CD4-positive, alpha-beta memory T cell (primary cell): ENCODE measurements at regions of chr10 and their contacts with region 1.

Region 1: GRCh38 chr10:58334817-58335305 is at the start of gene UBE2D1:
- DNase-seq: peak; percentile 73 to 76 (median 74)
- H3K4me3 ChIP-seq: peak within 1 kb of the TSS; percentile 59 to 63
- H3K4me3 Mint-ChIP-seq: peak within 1 kb of the TSS; percentile 91 to 97 (median 94)
- H3K27ac ChIP-seq: peak within 1 kb of the TSS; percentile 58
- H3K27ac Mint-ChIP-seq: peak within 1 kb of the TSS; percentile 38 to 96 (median 90)
- H3K4me1 ChIP-seq: peaks cover 30% of the 10 kb centered on the region
- H3K4me1 Mint-ChIP-seq: peaks cover 25 to 45% (median 34%) of the 10 kb centered on the region in 4 donors
- H3K27me3 ChIP-seq: no peaks in the 10 kb centered on the region
- H3K27me3 Mint-ChIP-seq: peaks cover 0 to 3% of the 10 kb centered on the region in 2 donors
- total RNA-seq, gene UBE2D1: 13.4 to 13.6 TPM

Region 2: DNA sequence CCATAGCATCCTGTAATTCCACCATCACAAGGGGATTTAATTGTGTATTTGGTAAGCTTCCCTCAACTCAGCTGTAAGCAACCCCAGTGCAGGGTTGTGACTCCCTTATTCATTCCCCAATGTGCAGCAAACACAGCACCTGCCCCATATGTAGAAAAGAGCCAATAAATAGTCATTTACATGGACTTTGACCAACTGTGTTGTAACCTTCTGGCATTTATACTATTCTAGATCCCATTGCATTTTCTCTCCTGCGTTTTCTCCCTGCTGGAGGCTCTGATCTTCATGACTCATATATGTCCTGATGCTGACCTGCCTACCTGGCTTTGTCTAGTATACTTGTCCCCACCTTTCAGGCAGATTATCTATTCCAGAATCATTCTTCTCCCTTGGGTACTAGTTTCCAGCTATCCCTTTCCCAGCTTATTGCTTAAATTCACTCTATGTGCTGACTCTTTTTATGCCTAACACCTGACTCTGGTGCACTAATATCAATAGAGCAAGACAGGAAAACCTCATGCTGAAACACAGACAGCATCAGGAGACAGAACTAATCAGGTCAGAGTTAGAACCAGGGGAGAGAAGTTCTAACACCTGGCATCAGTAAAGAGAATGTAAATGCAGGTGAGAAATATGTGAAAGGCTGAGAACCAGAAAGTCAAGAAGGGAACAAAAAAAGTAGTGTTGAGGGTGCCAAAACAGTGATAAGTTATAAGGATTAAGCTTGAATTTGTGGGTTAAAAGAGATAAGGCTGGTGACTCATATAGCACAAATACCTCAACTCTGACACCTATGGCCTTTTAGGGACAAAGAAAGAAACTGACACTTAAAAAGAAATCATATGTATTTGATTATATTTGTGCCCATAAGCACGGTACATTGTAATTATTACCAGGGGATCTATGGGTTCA is 469.8 kb before region 1 on chr10:
- CTCF ChIA-PET with region 1: no interaction called
- POLR2A ChIA-PET with region 1: no interaction called
- intact Hi-C with region 1: no loop called
- DNase-seq: no peak
- H3K4me3 ChIP-seq: no peak overlapping the region
- H3K4me3 Mint-ChIP-seq: no peak overlapping the region
- H3K27ac ChIP-seq: no peak overlapping the region
- H3K27ac Mint-ChIP-seq: no peak overlapping the region
- H3K4me1 ChIP-seq: no peaks in the 10 kb centered on the region
- H3K4me1 Mint-ChIP-seq: no peaks in the 10 kb centered on the region
- H3K27me3 ChIP-seq: no peaks in the 10 kb centered on the region
- H3K27me3 Mint-ChIP-seq: no peaks in the 10 kb centered on the region

Region 3: GRCh38 chr10:57898237-57898636 is 436.6 kb before region 1 on chr10:
- CTCF ChIA-PET with region 1: no interaction called
- POLR2A ChIA-PET with region 1: no interaction called
- intact Hi-C with region 1: no loop called
- DNase-seq: no peak
- H3K4me3 ChIP-seq: no peak overlapping the region
- H3K4me3 Mint-ChIP-seq: no peak overlapping the region
- H3K27ac ChIP-seq: no peak overlapping the region
- H3K27ac Mint-ChIP-seq: no peak overlapping the region
- H3K4me1 ChIP-seq: no peaks in the 10 kb centered on the region
- H3K4me1 Mint-ChIP-seq: no peaks in the 10 kb centered on the region
- H3K27me3 ChIP-seq: no peaks in the 10 kb centered on the region
- H3K27me3 Mint-ChIP-seq: no peaks in the 10 kb centered on the region

Region 4: DNA sequence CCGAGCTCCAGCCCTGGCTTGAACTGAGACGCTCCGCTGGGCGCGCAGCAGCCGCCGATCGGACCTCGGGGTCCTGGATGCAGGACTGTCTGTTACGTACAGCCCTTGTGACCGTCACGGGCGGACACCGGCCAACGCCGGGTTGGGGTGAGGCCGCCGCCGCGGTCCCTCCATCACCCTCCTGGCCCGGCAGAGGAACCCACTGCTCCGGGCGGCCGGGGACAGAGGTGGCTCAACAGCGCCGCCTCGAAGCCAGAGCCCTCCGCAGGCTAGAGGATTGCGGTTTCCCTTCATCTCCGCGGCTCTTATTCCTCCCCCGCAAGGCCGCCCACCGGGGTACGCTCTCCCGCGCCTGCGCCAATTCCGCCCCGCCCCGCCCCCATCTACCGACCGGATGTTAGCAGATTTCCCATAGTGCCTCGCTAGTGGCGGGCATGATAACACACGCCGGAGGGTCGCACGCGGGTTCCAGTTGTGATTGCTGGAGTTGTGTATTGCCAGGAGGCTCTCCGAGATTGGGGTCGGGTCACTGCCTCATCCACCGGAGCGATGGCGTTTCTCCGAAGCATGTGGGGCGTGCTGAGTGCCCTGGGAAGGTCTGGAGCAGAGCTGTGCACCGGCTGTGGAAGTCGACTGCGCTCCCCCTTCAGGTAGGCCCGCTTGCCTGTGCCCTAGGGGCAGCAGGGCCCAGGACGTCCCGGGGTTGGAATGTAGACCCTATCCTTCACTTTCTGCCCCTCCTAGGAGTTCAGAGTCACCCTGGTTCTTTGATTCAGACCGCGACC is 50.3 kb after region 1 on chr10 and contains the start of gene TFAM:
- CTCF ChIA-PET with region 1: interaction called, 6 read pairs
- POLR2A ChIA-PET with region 1: interaction called, 22 read pairs
- intact Hi-C with region 1: loop called (anchors 1 kb)
- DNase-seq: peak; percentile 92 to 95 (median 93)
- H3K4me3 ChIP-seq: peak within 1 kb of the TSS; percentile 89 to 96
- H3K4me3 Mint-ChIP-seq: peak within 1 kb of the TSS; percentile 90 to 99 (median 98)
- H3K27ac ChIP-seq: peak within 1 kb of the TSS; percentile 74
- H3K27ac Mint-ChIP-seq: peak within 1 kb of the TSS; percentile 92 to 98 (median 96)
- H3K4me1 ChIP-seq: peaks cover 48% of the 10 kb centered on the region
- H3K4me1 Mint-ChIP-seq: peaks cover 28 to 57% (median 39%) of the 10 kb centered on the region in 4 donors
- H3K27me3 ChIP-seq: no peaks in the 10 kb centered on the region
- H3K27me3 Mint-ChIP-seq: peaks cover 0 to 1% of the 10 kb centered on the region in 2 donors
- total RNA-seq, gene TFAM: 45.6 to 52.1 TPM